Dorsolateral prefrontal cortex (tissue), 120 donors: ENCODE measurements at regions of chr3 and their contacts with region 1.

Region 1: DNA sequence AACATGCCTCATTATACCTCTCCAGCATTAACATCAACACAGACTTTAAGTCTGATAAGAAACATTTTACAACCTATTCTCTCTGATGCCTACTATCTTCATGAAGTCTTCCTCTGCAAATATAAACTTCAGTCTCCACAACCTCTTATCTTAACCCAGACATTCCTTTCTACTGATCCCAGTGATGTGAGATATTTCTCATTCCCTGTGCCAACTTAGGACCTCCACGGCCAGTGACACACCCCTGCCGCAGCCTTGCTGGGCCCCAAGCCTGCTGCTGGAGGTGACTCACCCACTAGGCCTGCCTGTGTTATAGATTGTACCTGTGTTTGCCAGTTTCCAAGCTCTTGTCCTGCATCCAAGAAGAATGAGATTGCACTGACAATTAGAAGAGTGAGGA is 734.5 kb upstream of the CADM2 start:
- DNase-seq: no peak
- H3K4me3 ChIP-seq: no peak overlapping the region
- H3K27ac ChIP-seq: no peak overlapping the region
- H3K27me3 ChIP-seq: no peaks in the 10 kb centered on the region
- CTCF ChIP-seq: no peak

Region 2: GRCh38 chr3:83928391-83928790 is 295.9 kb before region 1 on chr3:
- intact Hi-C with region 1: no loop called
- DNase-seq: no peak
- H3K4me3 ChIP-seq: no peak overlapping the region
- H3K27ac ChIP-seq: no peak overlapping the region
- H3K27me3 ChIP-seq: no peaks in the 10 kb centered on the region
- CTCF ChIP-seq: peak in 1 of 56 donors; percentile 4

Region 3: DNA sequence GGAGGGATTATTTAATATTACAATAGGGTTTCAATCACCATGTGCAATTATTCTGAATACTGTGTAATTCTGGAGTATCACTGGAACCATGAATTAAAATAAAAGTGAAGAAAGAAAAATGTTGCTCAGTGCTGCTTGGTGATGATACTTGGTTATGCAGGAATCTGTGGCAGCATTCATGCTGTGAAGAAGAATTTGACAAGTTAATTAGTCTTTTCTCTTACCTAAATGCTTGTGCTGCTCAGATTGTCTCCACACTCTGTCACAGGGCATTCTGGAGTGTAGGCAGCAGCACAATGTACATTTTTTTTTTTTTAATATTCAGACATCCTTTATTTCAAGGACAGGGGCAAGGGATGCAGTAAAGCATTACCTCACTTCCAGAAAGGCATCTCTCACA is 14.8 kb before region 1 on chr3:
- intact Hi-C with region 1: loop called in 1 of 2 experiments (anchors 1 kb)
- DNase-seq: no peak
- H3K4me3 ChIP-seq: no peak overlapping the region
- H3K27ac ChIP-seq: no peak overlapping the region
- H3K27me3 ChIP-seq: no peaks in the 10 kb centered on the region
- CTCF ChIP-seq: no peak